ENCODE measurements at regions of chr5 and their contacts with region 1.

Region 1: GRCh38 chr5:11672385-11673085 is 231.7 kb downstream of the CTNND2 start:
- DNase-seq: no peak
- ATAC-seq: no peak
- H3K4me3 ChIP-seq: no peak overlapping the region
- H3K27ac ChIP-seq: no peak overlapping the region
- H3K4me1 ChIP-seq: no peaks in the 10 kb centered on the region
- H3K27me3 ChIP-seq: no peaks in the 10 kb centered on the region
- CTCF ChIP-seq: no peak
- EP300 ChIP-seq: no peak
- POLR2A ChIP-seq: no peak
- RAD21 ChIP-seq: no peak

Region 2: DNA sequence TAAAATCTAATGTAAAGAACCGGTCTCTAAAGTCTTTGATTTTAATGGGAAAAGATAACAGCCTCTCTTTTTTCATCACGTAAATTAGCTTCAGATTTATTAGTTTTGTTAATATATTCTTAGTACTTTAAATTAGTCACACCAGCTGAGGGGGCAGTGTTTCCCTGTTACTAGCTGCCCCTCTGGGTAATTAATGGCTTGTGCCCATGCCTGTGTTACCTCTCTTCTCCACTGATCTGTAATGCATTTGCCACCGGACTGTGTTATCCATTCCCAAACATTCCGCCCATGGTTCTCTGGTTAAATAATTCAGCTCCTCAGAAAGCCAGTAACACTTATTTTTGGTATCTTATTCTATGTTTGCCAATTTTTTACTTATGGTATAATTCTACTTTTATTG is 34.6 kb before region 1 on chr5:
- CTCF ChIA-PET with region 1: no interaction called
- POLR2A ChIA-PET with region 1: no interaction called
- in situ Hi-C with region 1: no loop called
- intact Hi-C with region 1: loop called (anchors 1 kb)
- DNase-seq: no peak
- ATAC-seq: no peak
- H3K4me3 ChIP-seq: no peak overlapping the region
- H3K27ac ChIP-seq: no peak overlapping the region
- H3K4me1 ChIP-seq: no peaks in the 10 kb centered on the region
- H3K27me3 ChIP-seq: no peaks in the 10 kb centered on the region
- CTCF ChIP-seq: no peak
- EP300 ChIP-seq: no peak
- POLR2A ChIP-seq: no peak
- RAD21 ChIP-seq: no peak

Measured in HepG2 (cell line).